MCF 10A (cell line): ENCODE measurements at regions of chr11 and their contacts with region 1.

Region 1: DNA sequence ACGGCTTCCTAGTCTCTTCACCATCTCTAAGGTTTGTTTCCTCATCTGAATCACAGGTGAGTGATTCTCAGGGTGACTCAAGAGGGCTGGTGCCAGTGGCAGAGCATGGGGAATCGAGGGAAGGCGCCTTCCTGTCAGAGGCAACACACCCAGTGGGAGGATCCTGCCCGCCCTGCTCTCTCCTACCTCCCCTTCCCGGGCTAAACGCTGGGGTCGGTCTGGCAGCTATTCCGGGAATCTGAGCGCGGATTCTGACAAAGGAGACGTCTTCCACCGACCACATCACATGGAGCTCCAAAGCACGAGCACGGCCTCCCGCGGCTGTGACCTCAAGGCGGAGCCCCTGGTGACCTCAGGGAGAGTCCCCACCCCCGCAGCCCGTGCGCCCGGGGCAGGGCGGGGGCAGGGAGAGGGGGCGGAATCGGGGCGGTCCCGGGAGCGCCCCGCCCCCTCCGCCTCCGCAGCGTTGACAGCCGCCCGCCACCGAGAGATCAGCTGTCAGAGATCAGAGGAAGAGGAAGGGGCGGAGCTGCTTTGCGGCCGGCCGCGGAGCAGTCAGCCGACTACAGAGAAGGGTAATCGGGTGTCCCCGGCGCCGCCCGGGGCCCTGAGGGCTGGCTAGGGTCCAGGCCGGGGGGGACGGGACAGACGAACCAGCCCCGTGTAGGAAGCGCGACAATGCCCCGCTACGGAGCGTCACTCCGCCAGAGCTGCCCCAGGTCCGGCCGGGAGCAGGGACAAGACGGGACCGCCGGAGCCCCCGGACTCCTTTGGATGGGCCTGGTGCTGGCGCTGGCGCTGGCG is at the start of gene SMPD1:
- DNase-seq: peak; percentile 91
- H3K4me3 Mint-ChIP-seq: peak within 1 kb of the TSS; percentile 94
- H3K27ac Mint-ChIP-seq: peak within 1 kb of the TSS; percentile 96
- H3K4me1 Mint-ChIP-seq: peaks cover 29% of the 10 kb centered on the region
- H3K27me3 Mint-ChIP-seq: no peaks in the 10 kb centered on the region
- CTCF ChIP-seq: no peak
- total RNA-seq, gene SMPD1: 15.0 and 32.2 TPM in 2 replicates

Region 2: DNA sequence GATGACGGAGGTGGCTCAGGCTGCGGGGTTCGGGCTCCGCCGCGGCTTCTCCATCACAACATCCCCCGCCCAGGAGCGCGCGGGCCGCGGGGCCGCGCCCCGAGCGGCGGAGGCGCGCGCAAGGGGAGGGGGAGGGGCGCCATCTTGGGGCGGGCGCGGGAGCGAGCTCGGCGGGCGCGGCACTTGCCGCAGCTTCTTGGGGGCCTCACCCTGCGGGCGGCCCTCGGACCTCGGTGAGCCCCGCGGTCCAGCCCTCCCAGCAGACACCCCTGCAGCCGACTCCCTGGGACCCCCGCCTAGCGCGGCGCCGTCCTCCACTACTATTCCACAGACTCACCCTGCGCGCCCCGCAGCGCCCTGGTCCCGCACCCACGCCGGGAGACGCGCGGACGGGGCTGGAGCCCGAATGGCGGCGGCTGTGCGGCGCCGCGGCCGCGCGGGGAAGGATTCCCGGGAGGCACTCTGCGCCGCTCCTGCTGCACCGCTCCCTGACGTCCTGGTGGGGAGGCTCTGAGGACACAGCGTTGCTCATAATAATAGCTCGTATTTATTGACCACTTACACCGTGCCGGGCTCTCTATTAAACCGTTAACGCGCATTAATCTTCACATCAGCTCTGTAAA is 29.0 kb after region 1 on chr11 and contains the start of gene APBB1:
- CTCF ChIA-PET with region 1: interaction called, 4 read pairs
- POLR2A ChIA-PET with region 1: interaction called, 10 read pairs
- intact Hi-C with region 1: no loop called
- DNase-seq: no peak
- H3K4me3 Mint-ChIP-seq: peak within 1 kb of the TSS; percentile 45
- H3K27ac Mint-ChIP-seq: no peak within 1 kb of the TSS
- H3K4me1 Mint-ChIP-seq: no peaks in the 10 kb centered on the region
- H3K27me3 Mint-ChIP-seq: peaks cover 37% of the 10 kb centered on the region
- CTCF ChIP-seq: no peak
- total RNA-seq, gene APBB1: 0.89 and 1.3 TPM in 2 replicates

Region 3: DNA sequence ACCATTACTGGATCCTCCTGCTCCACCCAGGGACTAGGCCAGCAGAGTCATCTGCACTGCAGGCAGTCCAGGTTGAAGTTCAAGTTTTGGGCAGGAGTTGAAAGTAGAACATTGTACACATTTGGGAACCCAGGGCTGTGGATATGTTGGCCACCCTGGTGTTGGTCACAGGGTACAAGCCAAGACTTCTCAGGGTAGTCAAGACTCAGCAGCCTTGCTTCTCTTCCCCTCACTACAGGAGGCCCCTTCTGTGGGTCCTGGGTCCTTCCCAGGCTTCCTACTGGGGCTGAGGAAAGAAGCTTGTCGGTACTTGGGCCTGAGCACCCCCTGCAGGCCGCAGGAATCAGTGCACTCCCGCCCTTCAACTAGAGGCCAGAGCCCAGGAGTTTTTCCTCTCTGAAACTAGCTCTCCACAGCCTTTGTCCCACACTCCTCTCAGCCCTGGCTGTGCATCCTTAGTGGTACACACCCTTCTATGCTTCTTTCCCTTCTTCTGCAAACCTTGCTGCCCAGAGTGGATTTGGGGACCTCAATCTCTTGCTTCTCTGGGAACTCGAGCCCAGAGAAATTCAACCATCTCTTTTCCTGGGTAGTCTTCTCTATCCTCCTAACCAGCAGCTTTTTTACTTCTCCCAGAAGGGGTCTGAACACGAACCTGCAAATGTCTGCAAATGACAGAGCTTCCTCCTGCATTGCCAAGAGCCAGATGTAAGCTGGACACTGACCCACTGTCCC is 53.3 kb after region 1 on chr11:
- CTCF ChIA-PET with region 1: interaction called, 16 read pairs
- POLR2A ChIA-PET with region 1: interaction called, 4 read pairs
- intact Hi-C with region 1: no loop called
- DNase-seq: peak; percentile 57
- H3K4me3 Mint-ChIP-seq: no peak overlapping the region
- H3K27ac Mint-ChIP-seq: no peak overlapping the region
- H3K4me1 Mint-ChIP-seq: no peaks in the 10 kb centered on the region
- H3K27me3 Mint-ChIP-seq: no peaks in the 10 kb centered on the region
- CTCF ChIP-seq: peak; percentile 88

Region 4: GRCh38 chr11:6481012-6481923 is 91.1 kb after region 1 on chr11 and contains the starts of genes ARFIP2 and TIMM10B:
- CTCF ChIA-PET with region 1: no interaction called
- POLR2A ChIA-PET with region 1: interaction called, 32 read pairs
- intact Hi-C with region 1: no loop called
- DNase-seq: peak; percentile 96
- H3K4me3 Mint-ChIP-seq: peak within 1 kb of the TSS; percentile 93
- H3K27ac Mint-ChIP-seq: peak within 1 kb of the TSS; percentile 99
- H3K4me1 Mint-ChIP-seq: peaks cover 17% of the 10 kb centered on the region
- H3K27me3 Mint-ChIP-seq: no peaks in the 10 kb centered on the region
- CTCF ChIP-seq: no peak
- total RNA-seq, gene ARFIP2: 76.3 and 96.0 TPM in 2 replicates
- total RNA-seq, gene TIMM10B: 36.2 and 42.1 TPM in 2 replicates

Region 5: GRCh38 chr11:6603287-6604080 is 213.4 kb after region 1 on chr11 and contains the starts of genes ILK and RRP8:
- CTCF ChIA-PET with region 1: interaction called, 3 read pairs
- POLR2A ChIA-PET with region 1: interaction called, 14 read pairs
- intact Hi-C with region 1: no loop called
- DNase-seq: peak; percentile 90
- H3K4me3 Mint-ChIP-seq: no peak within 1 kb of the TSS
- H3K27ac Mint-ChIP-seq: no peak within 1 kb of the TSS
- H3K4me1 Mint-ChIP-seq: peaks cover 22% of the 10 kb centered on the region
- H3K27me3 Mint-ChIP-seq: no peaks in the 10 kb centered on the region
- CTCF ChIP-seq: no peak
- total RNA-seq, gene ILK: 78.9 and 92.3 TPM in 2 replicates
- total RNA-seq, gene RRP8: 23.4 and 27.6 TPM in 2 replicates

Region 6: DNA sequence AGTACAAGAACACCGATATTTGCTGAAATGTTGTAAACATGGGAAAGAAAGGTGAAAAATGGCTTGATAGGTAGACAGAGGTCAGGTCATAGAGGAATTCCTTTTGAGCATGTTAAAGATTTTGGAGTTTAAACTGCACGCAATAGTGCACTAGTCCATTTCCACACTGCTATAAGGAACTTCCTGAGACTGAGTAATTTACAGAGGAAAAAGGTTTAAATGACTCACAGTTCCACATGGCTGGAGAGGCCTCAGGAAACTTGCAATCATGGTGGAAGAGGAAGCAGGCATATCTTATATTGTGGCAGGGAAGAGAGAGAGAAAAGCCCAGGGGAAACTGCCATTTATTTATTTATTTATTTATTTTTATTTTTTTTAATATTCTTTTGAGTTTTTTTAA is 460.4 kb after region 1 on chr11:
- CTCF ChIA-PET with region 1: no interaction called
- POLR2A ChIA-PET with region 1: no interaction called
- intact Hi-C with region 1: no loop called
- DNase-seq: no peak
- H3K4me3 Mint-ChIP-seq: no peak overlapping the region
- H3K27ac Mint-ChIP-seq: no peak overlapping the region
- H3K4me1 Mint-ChIP-seq: no peaks in the 10 kb centered on the region
- H3K27me3 Mint-ChIP-seq: no peaks in the 10 kb centered on the region
- CTCF ChIP-seq: no peak